Activated B cell treated with CpG ODN at 0.5 μM for 24 hours (primary cell): ENCODE measurements at regions of chr1 and their contacts with region 1.

Region 1: DNA sequence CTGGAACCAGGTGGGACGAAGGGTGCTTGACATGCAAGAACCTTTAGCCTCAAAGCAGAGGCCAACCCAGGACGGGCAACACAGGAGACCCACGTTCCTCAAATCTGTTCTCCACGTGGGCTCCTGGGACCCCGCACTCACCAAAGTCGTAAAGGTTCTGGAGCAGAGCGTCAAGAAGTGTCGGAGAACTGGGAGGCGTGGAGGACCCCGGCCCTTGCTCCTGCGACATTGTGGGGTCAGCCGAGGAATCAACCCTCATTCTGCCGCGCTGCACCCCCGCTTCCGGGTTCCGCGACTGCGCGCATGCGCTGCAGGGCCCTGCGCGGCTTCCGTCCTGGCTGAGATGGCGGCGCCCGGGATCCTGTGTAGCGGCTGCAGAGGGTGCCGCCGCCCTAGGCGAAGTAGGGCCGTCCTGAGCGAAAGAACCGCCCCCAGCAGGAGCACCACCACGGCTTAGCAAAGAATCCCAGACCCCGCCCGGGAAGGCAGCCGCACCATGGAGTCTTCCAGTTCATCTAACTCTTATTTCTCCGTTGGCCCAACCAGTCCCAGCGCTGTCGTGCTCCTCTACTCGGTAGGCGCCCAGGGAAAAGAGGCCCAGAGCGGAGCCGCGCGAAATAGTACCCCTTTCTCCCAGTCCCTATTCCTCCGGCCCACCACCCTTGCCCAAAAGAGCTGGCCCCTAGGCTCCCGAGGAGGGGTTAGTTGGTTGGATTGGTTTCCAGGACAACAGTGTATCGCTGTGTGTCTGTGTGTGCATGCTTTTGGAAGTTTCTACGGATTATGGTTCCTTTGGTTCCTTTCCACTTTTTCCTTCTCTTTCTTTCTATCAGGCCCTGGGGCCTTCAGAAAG is at the start of gene GNPAT:
- DNase-seq: peak; percentile 94
- ATAC-seq: peak; percentile 98
- H3K4me3 Mint-ChIP-seq: peak within 1 kb of the TSS; percentile 93
- H3K27ac Mint-ChIP-seq: peak within 1 kb of the TSS; percentile 94
- H3K4me1 Mint-ChIP-seq: peaks cover 58% of the 10 kb centered on the region
- H3K27me3 Mint-ChIP-seq: no peaks in the 10 kb centered on the region
- CTCF ChIP-seq: no peak
- total RNA-seq, gene GNPAT: 45.7 and 47.4 TPM in 2 replicates

Region 2: GRCh38 chr1:230550428-230550827 is 690.7 kb before region 1 on chr1:
- CTCF ChIA-PET with region 1: no interaction called
- POLR2A ChIA-PET with region 1: no interaction called
- intact Hi-C with region 1: no loop called
- DNase-seq: no peak
- ATAC-seq: no peak
- H3K4me3 Mint-ChIP-seq: no peak overlapping the region
- H3K27ac Mint-ChIP-seq: no peak overlapping the region
- H3K4me1 Mint-ChIP-seq: no peaks in the 10 kb centered on the region
- H3K27me3 Mint-ChIP-seq: peaks cover 15% of the 10 kb centered on the region
- CTCF ChIP-seq: no peak

Region 3: DNA sequence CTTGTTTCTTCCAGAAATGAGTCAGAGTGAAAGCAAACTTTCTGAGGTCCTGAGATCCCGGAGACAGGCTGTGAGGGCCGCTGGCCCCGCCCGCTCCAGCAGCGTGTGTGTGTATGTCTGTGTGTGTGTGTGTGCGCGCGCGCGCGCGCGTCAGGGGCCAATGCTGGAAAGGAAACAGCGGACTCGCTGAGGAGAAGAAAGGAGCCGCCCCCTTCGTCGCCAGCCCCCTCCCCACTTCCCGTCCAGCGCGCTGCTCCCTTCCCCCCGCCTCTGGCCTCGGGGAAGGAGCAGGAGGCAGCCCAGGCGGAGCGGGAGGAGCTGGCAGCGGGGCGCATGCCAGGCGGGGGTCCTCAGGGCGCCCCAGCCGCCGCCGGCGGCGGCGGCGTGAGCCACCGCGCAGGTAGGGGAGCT is 385.4 kb after region 1 on chr1 and contains the start of gene DISC1:
- CTCF ChIA-PET with region 1: no interaction called
- POLR2A ChIA-PET with region 1: no interaction called
- intact Hi-C with region 1: loop called (anchors 5 kb)
- DNase-seq: peak; percentile 34
- ATAC-seq: peak; percentile 72
- H3K4me3 Mint-ChIP-seq: peak within 1 kb of the TSS; percentile 87
- H3K27ac Mint-ChIP-seq: peak within 1 kb of the TSS; percentile 76
- H3K4me1 Mint-ChIP-seq: peaks cover 23% of the 10 kb centered on the region
- H3K27me3 Mint-ChIP-seq: peaks cover 11% of the 10 kb centered on the region
- CTCF ChIP-seq: no peak
- total RNA-seq, gene DISC1: 2.4 TPM in 2 replicates